ENCODE measurements at regions of chr7 and their contacts with region 1.

Region 1: GRCh38 chr7:65307651-65308299 is 65.9 kb upstream of the ZNF92 start:
- DNase-seq: peak; percentile 61
- ATAC-seq: peak; percentile 53
- H3K4me3 Mint-ChIP-seq: no peak overlapping the region
- H3K27ac Mint-ChIP-seq: no peak overlapping the region
- H3K4me1 Mint-ChIP-seq: no peaks in the 10 kb centered on the region
- H3K27me3 Mint-ChIP-seq: peaks cover 7% of the 10 kb centered on the region

Region 2: GRCh38 chr7:64887756-64888508 is 419.8 kb before region 1 on chr7:
- CTCF ChIA-PET with region 1: interaction called, 10 read pairs
- POLR2A ChIA-PET with region 1: no interaction called
- DNase-seq: peak; percentile 54
- ATAC-seq: peak; percentile 56
- H3K4me3 Mint-ChIP-seq: peak overlapping the region; percentile 75
- H3K27ac Mint-ChIP-seq: no peak overlapping the region
- H3K4me1 Mint-ChIP-seq: peaks cover 13% of the 10 kb centered on the region
- H3K27me3 Mint-ChIP-seq: peaks cover 49% of the 10 kb centered on the region

Region 3: GRCh38 chr7:64951250-64951848 is 356.4 kb before region 1 on chr7:
- CTCF ChIA-PET with region 1: interaction called, 38 read pairs
- POLR2A ChIA-PET with region 1: no interaction called
- DNase-seq: no peak
- ATAC-seq: peak; percentile 33
- H3K4me3 Mint-ChIP-seq: no peak overlapping the region
- H3K27ac Mint-ChIP-seq: no peak overlapping the region
- H3K4me1 Mint-ChIP-seq: peaks cover 2% of the 10 kb centered on the region
- H3K27me3 Mint-ChIP-seq: peaks cover 29% of the 10 kb centered on the region

Region 4: GRCh38 chr7:65216459-65216858 is 91.3 kb before region 1 on chr7:
- CTCF ChIA-PET with region 1: interaction called, 18 read pairs
- POLR2A ChIA-PET with region 1: no interaction called
- DNase-seq: peak; percentile 74
- ATAC-seq: peak; percentile 58
- H3K4me3 Mint-ChIP-seq: no peak overlapping the region
- H3K27ac Mint-ChIP-seq: no peak overlapping the region
- H3K4me1 Mint-ChIP-seq: no peaks in the 10 kb centered on the region
- H3K27me3 Mint-ChIP-seq: no peaks in the 10 kb centered on the region

Region 5: DNA sequence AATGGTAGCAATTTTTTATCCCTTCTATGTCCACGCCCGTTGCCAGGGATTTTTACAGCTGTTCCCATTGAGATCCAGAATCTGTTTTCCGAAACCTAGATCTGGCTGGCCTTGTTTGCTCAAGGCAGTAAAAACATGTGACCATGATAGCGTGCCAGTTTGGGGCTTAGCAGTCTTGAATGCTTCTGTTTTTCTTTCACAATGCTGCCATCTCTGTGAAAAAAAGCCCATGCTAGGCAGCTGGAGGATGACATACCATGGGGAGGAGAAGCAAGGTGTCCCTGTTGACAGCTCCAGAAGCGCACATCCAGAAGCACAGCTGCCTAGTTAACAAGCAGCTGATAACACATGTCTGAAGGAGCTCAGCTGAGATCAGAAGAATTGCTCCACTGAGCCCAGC is 63.7 kb after region 1 on chr7:
- CTCF ChIA-PET with region 1: no interaction called
- POLR2A ChIA-PET with region 1: no interaction called
- DNase-seq: no peak
- ATAC-seq: no peak
- H3K4me3 Mint-ChIP-seq: no peak overlapping the region
- H3K27ac Mint-ChIP-seq: no peak overlapping the region
- H3K4me1 Mint-ChIP-seq: peaks cover 19% of the 10 kb centered on the region
- H3K27me3 Mint-ChIP-seq: no peaks in the 10 kb centered on the region